ENCODE measurements at regions of chr11 and their contacts with region 1.

Region 1: DNA sequence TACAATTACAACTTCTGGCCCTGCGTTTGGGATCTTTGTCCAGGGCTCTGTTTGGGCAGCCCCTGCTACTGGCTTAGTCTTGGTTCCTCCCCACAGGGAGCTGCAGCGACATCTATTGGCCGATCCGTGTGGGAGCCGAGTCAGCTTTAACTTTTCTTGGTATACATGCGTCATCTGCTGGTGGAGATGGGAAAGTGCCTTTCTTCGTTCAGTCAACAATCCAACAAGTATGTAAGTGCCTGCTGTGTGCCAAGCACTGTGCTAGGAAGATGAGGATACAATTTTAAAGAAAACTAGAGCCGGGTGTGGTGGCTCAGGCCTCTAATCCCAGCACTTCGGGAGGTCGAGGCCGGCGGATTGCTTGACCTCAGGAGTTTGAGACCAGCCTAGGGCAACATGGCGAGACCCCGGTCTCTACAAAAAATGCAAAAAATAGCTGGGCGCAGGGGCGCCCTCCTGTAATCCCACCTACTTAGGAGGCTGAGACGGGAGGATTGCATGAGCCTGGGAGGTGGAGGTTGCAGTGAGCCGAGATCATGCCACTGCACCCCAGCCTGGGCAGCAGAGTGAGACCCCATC is 8.2 kb downstream of the TPBGL start:
- DNase-seq: peak; percentile 51
- ATAC-seq: peak; percentile 98
- H3K4me3 ChIP-seq: no peak overlapping the region
- H3K27ac ChIP-seq: no peak overlapping the region
- H3K4me1 ChIP-seq: no peaks in the 10 kb centered on the region
- H3K27me3 ChIP-seq: peaks cover 1 to 3% of the 10 kb centered on the region in 2 experiments; a peak in 3 of 4 replicates
- CTCF ChIP-seq: peak; percentile 100; a peak in 5 of 6 replicates
- EP300 ChIP-seq: no peak
- POLR2A ChIP-seq: no peak
- RAD21 ChIP-seq: peak; percentile 98

Region 2: DNA sequence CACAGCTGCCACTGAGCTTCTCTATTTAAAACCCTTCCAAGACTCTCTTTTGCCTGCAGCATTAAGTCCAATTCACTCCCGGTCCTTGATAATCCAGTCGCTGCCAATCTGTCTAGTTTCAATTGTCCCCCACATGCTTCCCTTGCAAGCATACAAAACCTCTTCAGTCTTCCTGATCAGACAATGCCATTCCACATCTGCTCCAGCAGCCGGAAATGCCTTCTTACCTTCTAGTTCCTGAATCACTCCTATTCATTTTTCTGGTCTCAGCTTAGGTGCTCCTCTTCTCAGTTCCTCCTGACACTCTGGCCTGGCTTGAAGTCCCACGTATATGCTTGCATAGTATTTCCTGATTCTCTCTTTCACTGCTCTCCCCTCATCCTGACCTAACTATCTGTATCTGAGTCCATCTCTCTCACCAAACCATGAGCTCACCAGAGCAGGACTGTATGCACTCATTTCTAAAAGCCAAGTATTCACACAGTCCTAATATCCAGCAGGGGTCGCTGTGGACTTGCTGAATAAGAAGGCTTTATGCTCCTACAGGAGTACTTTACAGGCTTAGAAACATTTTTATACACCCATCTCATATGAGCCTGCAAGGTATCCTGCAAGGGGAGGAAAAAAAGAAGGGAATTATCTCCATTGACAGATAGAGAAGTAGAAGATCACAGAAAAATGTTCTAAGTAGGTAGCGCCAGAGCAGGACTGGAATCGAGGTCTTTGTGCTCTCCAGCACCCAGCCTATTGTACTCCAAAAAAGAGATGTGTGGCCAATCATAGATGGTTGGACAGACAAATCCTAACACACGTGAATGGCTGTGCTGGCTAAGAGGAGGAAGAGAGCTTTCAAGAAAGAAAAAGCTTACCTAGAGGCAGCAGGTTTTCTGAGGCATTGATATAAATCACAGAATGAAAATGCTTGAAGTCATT is 319.1 kb before region 1 on chr11:
- CTCF ChIA-PET with region 1: interaction called, 45 read pairs
- POLR2A ChIA-PET with region 1: no interaction called
- RAD21 ChIA-PET with region 1: interaction called, 11 read pairs
- SMC1A ChIA-PET with region 1: interaction called, 4 read pairs
- in situ Hi-C with region 1: loop called (anchors 5 kb)
- intact Hi-C with region 1: loop called (anchors 1 kb)
- DNase-seq: peak; percentile 49
- ATAC-seq: peak; percentile 100
- H3K4me3 ChIP-seq: no peak overlapping the region
- H3K27ac ChIP-seq: no peak overlapping the region
- H3K4me1 ChIP-seq: no peaks in the 10 kb centered on the region
- H3K27me3 ChIP-seq: no peaks in the 10 kb centered on the region
- CTCF ChIP-seq: peak; percentile 75 to 95 (median 90)
- EP300 ChIP-seq: no peak
- POLR2A ChIP-seq: no peak
- RAD21 ChIP-seq: peak; percentile 95

Region 3: DNA sequence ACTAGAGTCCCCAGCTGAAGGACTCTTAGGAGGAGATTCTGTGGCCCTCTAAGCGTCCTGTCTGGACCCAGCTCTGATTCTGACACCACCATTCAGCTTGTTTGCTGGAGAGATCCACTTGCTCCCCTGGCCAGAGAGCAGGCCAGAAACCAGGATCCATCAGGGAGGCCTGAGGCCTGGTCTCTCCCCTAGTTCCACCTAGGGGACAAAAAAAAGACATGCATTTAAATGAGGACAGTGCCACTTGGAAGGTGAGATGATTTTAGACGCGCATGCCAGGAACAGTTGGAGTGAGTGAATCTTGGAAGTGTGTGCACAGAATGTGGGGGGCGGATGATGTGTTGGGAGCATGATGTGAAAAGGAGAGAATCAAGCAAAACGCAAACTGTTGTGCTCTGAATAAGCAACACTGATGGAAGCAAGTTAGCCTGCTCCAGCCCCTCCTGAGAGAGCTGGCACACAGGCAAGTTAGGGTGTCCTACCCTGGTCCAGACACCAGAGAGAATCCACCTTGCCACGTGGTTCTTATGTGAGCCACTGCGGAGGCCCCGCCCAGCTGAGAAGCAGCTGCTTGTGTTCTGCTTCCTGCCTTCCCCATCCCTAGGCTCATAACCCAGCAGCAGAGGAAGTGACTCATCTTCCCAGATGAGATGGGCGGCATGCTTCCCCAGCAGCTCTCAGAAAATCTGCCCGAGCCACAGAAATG is 105.9 kb before region 1 on chr11:
- CTCF ChIA-PET with region 1: interaction called, 129 read pairs
- POLR2A ChIA-PET with region 1: no interaction called
- RAD21 ChIA-PET with region 1: interaction called, 17 read pairs
- SMC1A ChIA-PET with region 1: interaction called, 12 read pairs
- in situ Hi-C with region 1: loop called (anchors 5 kb)
- intact Hi-C with region 1: loop called (anchors 1 kb)
- DNase-seq: peak; percentile 55
- ATAC-seq: peak; percentile 78
- H3K4me3 ChIP-seq: no peak overlapping the region
- H3K27ac ChIP-seq: no peak overlapping the region
- H3K4me1 ChIP-seq: peaks cover 24% of the 10 kb centered on the region
- H3K27me3 ChIP-seq: no peaks in the 10 kb centered on the region
- CTCF ChIP-seq: no peak
- EP300 ChIP-seq: no peak
- POLR2A ChIP-seq: no peak
- RAD21 ChIP-seq: no peak

Region 4: DNA sequence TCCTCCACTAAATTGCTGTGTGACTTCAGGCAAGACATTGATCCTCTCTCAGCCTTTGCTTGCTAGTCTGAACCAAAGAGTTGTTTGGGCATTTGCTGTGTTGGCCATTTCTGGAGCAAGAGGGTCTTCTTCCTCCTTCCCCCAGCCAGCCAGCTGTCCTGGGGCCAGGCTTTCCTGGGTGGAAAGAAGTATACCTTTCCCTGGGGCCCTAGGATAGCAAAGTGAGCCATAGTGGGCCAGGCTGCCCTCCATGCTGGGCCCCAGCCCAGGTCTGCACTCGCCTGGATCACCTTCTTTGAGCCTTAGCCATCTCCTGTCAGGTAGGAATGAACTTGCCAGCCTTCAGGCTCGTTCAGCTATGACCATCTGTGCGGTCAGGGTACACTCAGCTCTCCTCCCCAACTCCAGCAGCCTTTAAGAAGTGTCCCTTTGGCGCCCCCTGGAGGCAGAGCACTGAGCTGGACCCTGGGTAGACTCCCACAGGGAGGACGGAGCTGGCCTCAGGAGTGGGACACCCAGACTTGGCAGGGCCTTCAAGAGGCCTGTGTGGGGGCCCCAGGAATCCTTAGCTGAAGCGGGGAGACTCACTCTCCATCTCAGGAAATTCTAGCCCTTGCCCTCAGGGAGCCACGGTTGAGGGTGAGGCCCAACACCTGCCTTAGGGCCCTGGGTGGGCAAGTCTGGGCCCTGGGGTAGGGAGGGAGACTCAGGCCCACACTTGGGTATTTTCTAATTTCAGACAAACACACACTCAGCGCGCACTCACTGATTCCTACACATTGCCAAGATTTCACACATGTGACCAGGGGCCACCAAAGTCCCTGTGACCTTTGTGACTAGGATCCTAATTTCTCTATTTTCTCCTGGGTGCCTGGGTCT is 43.9 kb before region 1 on chr11:
- CTCF ChIA-PET with region 1: interaction called, 11 read pairs
- POLR2A ChIA-PET with region 1: no interaction called
- RAD21 ChIA-PET with region 1: interaction called, 6 read pairs
- SMC1A ChIA-PET with region 1: interaction called, 4 read pairs
- in situ Hi-C with region 1: no loop called
- intact Hi-C with region 1: no loop called
- DNase-seq: peak; percentile 8
- ATAC-seq: peak; percentile 100
- H3K4me3 ChIP-seq: no peak overlapping the region
- H3K27ac ChIP-seq: no peak overlapping the region
- H3K4me1 ChIP-seq: no peaks in the 10 kb centered on the region
- H3K27me3 ChIP-seq: peaks cover 0 to 4% of the 10 kb centered on the region in 2 experiments; a peak in 1 of 4 replicates
- CTCF ChIP-seq: peak; percentile 87 to 94 (median 89)
- EP300 ChIP-seq: no peak
- POLR2A ChIP-seq: no peak
- RAD21 ChIP-seq: peak; percentile 84

Region 5: DNA sequence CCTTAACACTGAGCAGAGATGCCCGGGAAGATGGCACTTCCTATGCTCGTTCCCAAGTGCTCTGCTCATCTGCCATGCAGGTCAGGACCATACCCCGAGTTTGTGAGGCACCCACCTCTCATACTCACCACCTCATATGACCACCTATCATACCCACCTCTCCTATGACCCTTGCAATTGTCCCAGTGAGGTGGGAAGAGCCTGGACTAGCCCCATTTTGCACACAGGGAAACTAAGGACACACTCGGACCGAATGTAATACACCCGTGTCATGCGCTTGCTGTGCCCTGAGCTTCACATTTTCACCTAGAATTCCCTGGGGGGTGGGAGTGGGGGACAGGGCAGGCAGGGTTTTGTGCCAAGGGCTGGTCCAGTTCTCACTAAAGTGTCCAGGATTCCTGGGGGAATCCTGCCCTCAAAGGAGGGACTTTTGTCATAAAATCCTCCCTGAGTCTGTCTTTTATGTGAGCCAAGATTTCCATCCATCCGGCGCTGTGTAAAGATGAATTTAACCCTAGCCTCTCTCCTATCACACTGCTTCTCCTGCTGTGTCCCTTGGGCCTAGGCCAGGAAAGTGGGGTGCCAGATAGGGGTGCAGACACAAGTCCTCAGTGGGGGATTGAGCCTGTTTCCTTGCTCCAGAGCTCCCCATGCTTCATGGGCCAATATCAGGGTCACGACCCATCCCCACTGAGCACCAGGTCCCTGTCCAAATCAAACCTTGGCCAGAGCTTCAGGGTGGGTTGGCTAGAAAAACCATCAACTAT is 11.8 kb after region 1 on chr11:
- CTCF ChIA-PET with region 1: interaction called, 27 read pairs
- POLR2A ChIA-PET with region 1: no interaction called
- RAD21 ChIA-PET with region 1: interaction called, 3 read pairs
- SMC1A ChIA-PET with region 1: interaction called, 5 read pairs
- in situ Hi-C with region 1: no loop called
- intact Hi-C with region 1: no loop called
- DNase-seq: no peak
- ATAC-seq: no peak
- H3K4me3 ChIP-seq: no peak overlapping the region
- H3K27ac ChIP-seq: no peak overlapping the region
- H3K4me1 ChIP-seq: no peaks in the 10 kb centered on the region
- H3K27me3 ChIP-seq: no peaks in the 10 kb centered on the region
- CTCF ChIP-seq: no peak
- EP300 ChIP-seq: no peak
- POLR2A ChIP-seq: no peak
- RAD21 ChIP-seq: no peak

Region 6: DNA sequence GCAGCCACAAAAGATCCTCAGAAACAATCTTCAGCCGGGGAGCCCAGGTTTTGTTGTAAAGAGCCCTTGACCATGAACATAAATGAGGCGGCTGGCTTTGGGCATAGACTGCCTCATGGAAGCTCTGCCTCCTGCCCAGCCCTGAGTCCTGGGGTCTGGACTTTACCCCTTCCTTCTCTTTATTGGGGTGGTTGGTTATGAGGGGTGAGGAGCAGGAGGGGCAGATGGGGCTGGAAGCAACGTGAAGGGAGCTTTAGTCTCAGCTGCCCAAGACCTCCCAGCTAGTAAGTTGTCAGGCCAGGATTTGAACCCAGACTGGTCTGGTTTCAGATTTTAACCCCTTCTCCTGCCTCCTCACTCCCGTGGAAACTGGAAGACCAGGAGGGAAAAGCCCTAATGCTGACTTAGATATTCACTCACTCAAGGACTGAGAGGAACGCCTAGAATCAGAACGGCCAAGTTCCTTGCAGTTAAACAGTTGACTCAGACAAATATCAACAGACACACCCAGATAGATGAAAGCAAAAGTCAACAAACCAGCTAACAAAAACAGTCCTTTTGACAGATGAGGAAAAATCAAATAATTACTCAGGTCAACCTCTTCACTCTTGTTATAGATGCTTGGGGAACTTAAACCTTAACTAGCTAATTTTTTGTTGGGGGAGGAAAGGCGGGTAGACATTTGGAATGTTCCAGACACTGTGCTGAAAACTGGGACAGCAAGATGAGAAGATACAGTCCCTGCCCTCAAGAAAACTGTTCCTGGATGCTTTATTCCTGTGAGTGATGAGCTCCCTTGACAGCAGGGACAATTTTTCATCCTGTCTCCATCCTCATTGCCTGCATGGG is 123.4 kb after region 1 on chr11:
- CTCF ChIA-PET with region 1: no interaction called
- POLR2A ChIA-PET with region 1: no interaction called
- RAD21 ChIA-PET with region 1: no interaction called
- SMC1A ChIA-PET with region 1: no interaction called
- in situ Hi-C with region 1: no loop called
- intact Hi-C with region 1: no loop called
- DNase-seq: no peak
- ATAC-seq: no peak
- H3K4me3 ChIP-seq: no peak overlapping the region
- H3K27ac ChIP-seq: no peak overlapping the region
- H3K4me1 ChIP-seq: no peaks in the 10 kb centered on the region
- H3K27me3 ChIP-seq: no peaks in the 10 kb centered on the region; a peak in 2 of 4 replicates
- CTCF ChIP-seq: no peak
- EP300 ChIP-seq: no peak
- POLR2A ChIP-seq: no peak
- RAD21 ChIP-seq: no peak

Measured in GM12878 (cell line).